ENCODE measurements at regions of chr5 and their contacts with region 1.

Region 1: DNA sequence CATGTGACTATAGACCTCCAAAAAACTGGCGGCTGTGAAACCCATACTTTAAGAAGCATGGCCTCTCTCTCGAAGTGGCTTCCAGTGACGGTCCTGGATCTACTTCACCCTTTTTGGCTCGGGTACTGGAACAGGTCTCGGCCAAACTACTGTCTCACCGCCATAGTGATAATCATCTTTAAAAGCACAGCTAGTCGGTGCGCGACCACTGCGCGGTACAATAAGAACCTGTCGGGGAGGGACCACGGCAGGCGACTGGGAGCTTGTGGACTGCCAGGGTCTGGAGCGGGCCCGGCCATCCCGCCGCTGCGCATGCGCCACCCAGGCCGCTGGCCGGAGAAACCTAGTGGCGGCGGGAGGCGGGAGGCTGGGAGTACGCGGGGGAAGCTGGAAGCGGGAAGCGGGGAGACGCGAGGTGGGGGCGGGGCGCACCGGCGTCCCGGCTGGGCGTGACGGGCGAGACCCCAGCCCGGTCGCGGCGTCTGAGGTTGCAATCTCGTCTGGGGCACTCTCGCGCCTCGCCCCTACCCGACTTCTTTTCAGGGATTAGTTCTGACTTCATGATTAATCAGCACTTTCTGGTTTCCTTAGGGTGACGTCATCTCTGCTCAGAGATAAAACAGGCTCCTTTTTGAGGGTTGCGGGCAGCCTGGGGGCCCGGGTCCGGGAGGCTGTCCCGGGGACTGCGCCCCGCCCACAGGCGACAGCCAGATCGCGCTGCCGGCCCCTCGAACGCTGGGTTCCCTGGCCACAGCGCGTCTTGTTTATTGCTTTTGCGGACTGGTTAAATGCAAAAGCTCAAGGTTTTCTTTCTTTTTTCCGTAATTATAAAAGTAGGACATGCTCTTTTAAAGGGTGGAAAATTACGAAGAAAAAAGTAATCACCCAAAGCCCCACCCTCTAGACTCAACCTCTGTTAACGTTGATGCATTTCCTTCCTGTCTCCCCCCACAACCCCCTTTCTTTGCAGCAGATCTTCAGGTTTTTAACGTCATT is 266.8 kb downstream of the CWC27 start:
- DNase-seq: peak; percentile 69
- H3K4me3 Mint-ChIP-seq: peak overlapping the region; percentile 84
- H3K27ac Mint-ChIP-seq: peak overlapping the region; percentile 88
- H3K4me1 Mint-ChIP-seq: peaks cover 35% of the 10 kb centered on the region
- H3K27me3 Mint-ChIP-seq: no peaks in the 10 kb centered on the region

Region 2: GRCh38 chr5:64811050-64811640 is 224.4 kb before region 1 on chr5:
- intact Hi-C with region 1: loop called (anchors 5 kb)
- DNase-seq: no peak
- H3K4me3 Mint-ChIP-seq: no peak overlapping the region
- H3K27ac Mint-ChIP-seq: no peak overlapping the region
- H3K4me1 Mint-ChIP-seq: peaks cover 9% of the 10 kb centered on the region
- H3K27me3 Mint-ChIP-seq: no peaks in the 10 kb centered on the region

Region 3: GRCh38 chr5:65070026-65070425 is 34.5 kb after region 1 on chr5:
- intact Hi-C with region 1: no loop called
- DNase-seq: no peak
- H3K4me3 Mint-ChIP-seq: no peak overlapping the region
- H3K27ac Mint-ChIP-seq: no peak overlapping the region
- H3K4me1 Mint-ChIP-seq: no peaks in the 10 kb centered on the region
- H3K27me3 Mint-ChIP-seq: peaks cover 11% of the 10 kb centered on the region

Region 4: DNA sequence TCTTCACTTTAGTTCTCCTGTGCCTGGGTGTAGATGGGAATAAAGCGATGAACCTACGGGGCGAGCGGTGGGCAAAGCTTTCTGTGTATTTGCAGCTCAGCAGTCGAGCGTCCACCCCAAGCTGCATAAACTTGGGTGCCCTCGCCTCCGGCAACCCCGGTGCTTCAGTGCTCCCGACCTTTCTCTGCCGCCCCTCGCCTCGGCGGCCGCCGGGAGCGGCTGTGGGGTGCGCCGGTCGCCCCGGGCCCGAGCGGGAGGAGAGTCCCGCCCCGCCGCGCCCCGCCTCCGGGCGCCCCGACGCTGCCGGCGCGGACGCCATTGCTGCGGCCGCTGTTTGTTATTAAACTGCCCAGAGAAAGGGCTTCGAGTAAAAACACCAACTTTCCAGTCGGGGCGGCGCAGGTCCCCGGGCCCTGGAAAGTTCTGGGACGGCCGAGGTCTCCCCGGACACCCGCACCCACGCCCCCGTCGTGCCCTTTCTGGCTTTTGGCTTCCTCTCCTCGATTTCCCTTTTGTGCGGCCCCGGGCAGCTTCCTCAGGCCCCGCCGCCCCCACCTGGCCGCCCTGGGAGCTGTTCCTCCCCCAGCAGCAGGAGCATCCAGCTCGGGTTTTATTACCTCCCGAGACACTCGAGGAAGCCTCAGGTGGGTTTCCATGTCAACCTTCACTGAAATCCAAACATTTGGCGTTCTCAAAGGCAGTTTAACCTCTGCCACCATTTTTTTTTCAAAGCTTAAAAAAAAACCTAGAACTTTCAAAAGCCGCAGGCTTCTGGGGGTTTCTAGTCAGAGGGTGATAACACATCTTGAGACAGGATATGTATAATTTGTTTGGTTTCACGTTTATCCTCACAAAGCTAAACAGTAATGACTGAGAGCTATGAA is 67.6 kb after region 1 on chr5:
- intact Hi-C with region 1: loop called (anchors 2 kb)
- DNase-seq: no peak
- H3K4me3 Mint-ChIP-seq: peak overlapping the region; percentile 79
- H3K27ac Mint-ChIP-seq: peak overlapping the region; percentile 42
- H3K4me1 Mint-ChIP-seq: peaks cover 30% of the 10 kb centered on the region
- H3K27me3 Mint-ChIP-seq: peaks cover 25% of the 10 kb centered on the region

Region 5: GRCh38 chr5:65562731-65563701 is 527.5 kb after region 1 on chr5 and contains the starts of genes CENPK and PPWD1:
- intact Hi-C with region 1: loop called (anchors 5 kb)
- DNase-seq: peak; percentile 94
- H3K4me3 Mint-ChIP-seq: peak within 1 kb of the TSS; percentile 95
- H3K27ac Mint-ChIP-seq: peak within 1 kb of the TSS; percentile 99
- H3K4me1 Mint-ChIP-seq: peaks cover 53% of the 10 kb centered on the region
- H3K27me3 Mint-ChIP-seq: no peaks in the 10 kb centered on the region
- total RNA-seq, gene CENPK: 81.0 and 85.1 TPM in 2 replicates
- total RNA-seq, gene PPWD1: 63.6 and 65.4 TPM in 2 replicates

Region 6: DNA sequence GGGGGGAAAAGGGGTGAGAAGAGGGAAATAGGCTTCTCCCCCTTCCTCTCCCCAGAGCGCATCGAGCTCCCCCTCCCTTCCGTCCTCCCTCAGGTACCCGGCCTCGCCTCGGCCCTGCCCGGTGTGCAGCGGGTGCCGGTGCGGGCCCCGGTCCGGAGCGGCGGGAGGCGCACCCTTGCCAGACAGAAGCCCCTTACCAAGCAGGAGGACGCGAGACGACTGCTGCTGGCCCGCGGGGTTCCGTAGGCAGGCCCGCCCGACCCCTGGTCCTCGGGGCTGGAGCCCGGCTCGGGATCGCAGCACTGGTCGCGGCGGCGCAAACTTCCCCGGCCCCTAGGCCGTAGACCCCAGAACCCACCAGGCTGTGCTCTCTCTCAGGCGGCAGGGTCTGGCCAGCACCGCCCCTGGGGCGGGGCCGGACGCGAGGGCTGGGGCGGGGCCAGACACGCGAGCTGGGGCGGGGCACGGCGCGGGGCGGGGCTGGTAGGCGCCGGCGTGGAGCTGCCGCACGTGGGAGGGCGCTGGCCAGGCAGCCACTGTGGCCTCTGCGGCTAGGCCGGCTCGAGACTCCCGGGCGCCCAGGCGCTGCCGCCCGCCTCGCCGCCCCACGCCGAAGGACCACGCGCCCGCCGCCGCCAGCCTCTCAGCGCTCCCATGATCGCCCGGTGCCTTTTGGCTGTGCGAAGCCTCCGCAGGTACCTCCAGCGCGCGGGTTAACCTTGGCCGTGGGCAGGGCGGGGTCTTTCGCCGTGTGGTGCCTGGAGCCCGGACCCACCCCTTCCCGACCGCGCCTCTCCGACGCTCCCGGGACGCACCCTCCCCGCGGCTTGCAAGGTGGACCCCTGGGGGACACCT is 686.4 kb after region 1 on chr5 and contains the starts of genes NLN and SGTB:
- intact Hi-C with region 1: loop called (anchors 2 kb)
- DNase-seq: peak; percentile 81
- H3K4me3 Mint-ChIP-seq: peak within 1 kb of the TSS; percentile 95
- H3K27ac Mint-ChIP-seq: peak within 1 kb of the TSS; percentile 92
- H3K4me1 Mint-ChIP-seq: peaks cover 34% of the 10 kb centered on the region
- H3K27me3 Mint-ChIP-seq: no peaks in the 10 kb centered on the region
- total RNA-seq, gene NLN: 24.4 TPM in 2 replicates
- total RNA-seq, gene SGTB: 11.3 and 12.2 TPM in 2 replicates